Mammary epithelial cell (primary cell): ENCODE measurements at regions of chr19 and their contacts with region 1.

Region 1: DNA sequence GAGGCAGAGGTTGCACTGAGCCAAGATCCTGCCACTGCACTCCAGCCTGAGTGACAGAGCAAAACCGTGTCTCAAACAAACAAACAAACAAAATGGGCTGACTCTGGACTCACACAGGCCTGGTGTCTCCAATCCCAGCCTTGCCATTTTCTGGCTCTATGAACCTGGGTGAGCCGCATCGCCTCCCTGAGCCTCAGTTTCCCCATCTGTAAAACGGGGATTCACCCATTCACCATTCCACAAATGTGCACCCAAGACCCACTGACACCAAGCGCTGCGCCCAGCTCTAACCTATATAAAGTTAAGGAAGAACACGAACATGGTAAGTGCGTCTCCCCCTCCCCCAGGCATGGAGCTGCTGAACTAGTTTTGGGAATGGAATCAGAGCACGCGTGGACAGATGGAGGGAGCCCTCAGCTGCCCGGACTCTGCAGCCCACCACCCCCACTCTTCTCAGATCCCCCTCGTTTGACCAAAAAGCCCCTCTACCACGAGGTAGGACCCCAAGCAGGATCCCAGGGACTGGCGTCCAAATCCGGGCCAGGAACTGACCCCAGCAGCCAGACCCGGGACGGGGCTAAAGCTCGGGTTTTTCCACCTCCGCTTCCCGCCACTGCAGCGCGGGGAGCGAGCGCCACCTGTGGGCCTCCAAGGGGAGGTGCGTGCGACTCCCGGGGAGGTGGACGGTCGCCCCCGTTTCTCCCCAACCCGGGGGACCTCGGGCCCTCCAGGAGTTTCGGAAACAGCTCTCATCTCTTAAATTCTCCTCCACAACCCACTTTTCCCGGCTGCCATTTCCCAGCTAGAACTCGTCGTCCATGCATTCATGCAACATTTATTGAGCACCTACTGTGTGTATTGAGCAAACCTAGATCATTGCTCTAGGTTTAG is 33.0 kb upstream of the ADGRE5 start:
- DNase-seq: peak; percentile 26
- H3K4me3 ChIP-seq: peak overlapping the region in 1 of 3 experiments; percentile 22
- H3K27ac ChIP-seq: no peak overlapping the region
- H3K4me1 ChIP-seq: no peaks in the 10 kb centered on the region
- H3K27me3 ChIP-seq: peaks cover 2% of the 10 kb centered on the region
- CTCF ChIP-seq: peak; percentile 77 to 98

Region 2: GRCh38 chr19:14073261-14073924 is 274.9 kb before region 1 on chr19:
- CTCF ChIA-PET with region 1: no interaction called
- dilution Hi-C with region 1: no loop called
- in situ Hi-C with region 1: no loop called
- intact Hi-C with region 1: loop called (anchors 2 kb)
- DNase-seq: peak; percentile 74
- H3K4me3 ChIP-seq: peak overlapping the region; percentile 48 to 84 (median 49)
- H3K27ac ChIP-seq: peak overlapping the region; percentile 29
- H3K4me1 ChIP-seq: peaks cover 26% of the 10 kb centered on the region
- H3K27me3 ChIP-seq: no peaks in the 10 kb centered on the region
- CTCF ChIP-seq: peak in 1 of 2 donors; percentile 38

Region 3: GRCh38 chr19:14147797-14148605 is 200.2 kb before region 1 on chr19:
- CTCF ChIA-PET with region 1: no interaction called
- dilution Hi-C with region 1: no loop called
- in situ Hi-C with region 1: no loop called
- intact Hi-C with region 1: loop called (anchors 1 kb)
- DNase-seq: peak; percentile 17
- H3K4me3 ChIP-seq: no peak overlapping the region
- H3K27ac ChIP-seq: no peak overlapping the region
- H3K4me1 ChIP-seq: peaks cover 7% of the 10 kb centered on the region
- H3K27me3 ChIP-seq: no peaks in the 10 kb centered on the region
- CTCF ChIP-seq: peak; percentile 51 to 90

Region 4: GRCh38 chr19:14198384-14199376 is 149.6 kb before region 1 on chr19:
- CTCF ChIA-PET with region 1: no interaction called
- dilution Hi-C with region 1: no loop called
- in situ Hi-C with region 1: loop called in 1 of 2 experiments (anchors 10 kb)
- intact Hi-C with region 1: loop called (anchors 1 kb)
- DNase-seq: no peak
- H3K4me3 ChIP-seq: no peak overlapping the region
- H3K27ac ChIP-seq: no peak overlapping the region
- H3K4me1 ChIP-seq: no peaks in the 10 kb centered on the region
- H3K27me3 ChIP-seq: peaks cover 2% of the 10 kb centered on the region
- CTCF ChIP-seq: peak in 1 of 2 donors; percentile 16

Region 5: GRCh38 chr19:14366498-14366915 is 18.3 kb after region 1 on chr19:
- CTCF ChIA-PET with region 1: interaction called, 15 read pairs
- dilution Hi-C with region 1: no loop called
- in situ Hi-C with region 1: no loop called
- intact Hi-C with region 1: no loop called
- DNase-seq: peak; percentile 87
- H3K4me3 ChIP-seq: no peak overlapping the region
- H3K27ac ChIP-seq: no peak overlapping the region
- H3K4me1 ChIP-seq: peaks cover 7% of the 10 kb centered on the region
- H3K27me3 ChIP-seq: no peaks in the 10 kb centered on the region
- CTCF ChIP-seq: no peak